ENCODE measurements at regions of chr2 and their contacts with region 1.

Region 1: GRCh38 chr2:234135720-234136221 is 85.3 kb downstream of the SPP2 start:
- DNase-seq: peak; percentile 80 to 94
- ATAC-seq: peak; percentile 93 to 96
- H3K4me3 ChIP-seq: no peak overlapping the region
- H3K27ac ChIP-seq: peak overlapping the region; percentile 82 to 94
- H3K4me1 ChIP-seq: peaks cover 30% of the 10 kb centered on the region
- CTCF ChIP-seq: peak; percentile 92
- EP300 ChIP-seq: no peak
- POLR2A ChIP-seq: no peak
- RAD21 ChIP-seq: peak; percentile 99

Region 2: DNA sequence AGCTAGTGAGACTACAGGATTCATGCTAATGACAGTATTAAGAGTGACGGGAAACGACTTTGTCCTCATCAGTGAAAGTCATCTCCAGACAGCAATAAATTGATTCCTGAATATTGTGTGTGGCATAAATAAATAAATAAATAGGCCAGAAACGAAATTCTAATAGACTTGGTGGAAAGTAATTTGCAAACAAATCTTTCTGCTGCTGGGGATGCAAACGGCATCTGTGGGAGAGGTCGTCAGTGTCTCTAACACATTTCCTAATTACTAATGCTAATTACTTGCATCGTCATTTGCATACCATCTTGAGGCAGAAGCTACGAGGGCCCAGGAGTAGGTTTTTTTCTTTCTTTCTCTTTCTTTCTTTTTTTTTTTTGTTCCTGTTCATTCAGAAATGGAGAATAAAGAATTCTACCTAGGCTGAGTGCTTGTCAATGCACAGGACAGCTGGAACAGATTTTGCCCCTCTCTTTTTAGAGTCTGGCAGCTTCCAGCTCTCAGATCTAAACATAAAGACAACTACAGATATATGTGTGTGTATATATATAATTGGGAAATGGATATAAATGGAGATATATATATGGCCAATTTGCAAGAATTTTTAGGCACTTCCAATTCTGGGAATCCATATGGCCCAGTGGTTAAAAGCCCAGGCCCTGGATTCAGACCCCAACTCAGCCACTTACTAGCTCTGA is 10.2 kb before region 1 on chr2:
- CTCF ChIA-PET with region 1: interaction called, 12 read pairs
- POLR2A ChIA-PET with region 1: no interaction called
- DNase-seq: no peak
- ATAC-seq: no peak
- H3K4me3 ChIP-seq: no peak overlapping the region
- H3K27ac ChIP-seq: no peak overlapping the region
- H3K4me1 ChIP-seq: no peaks in the 10 kb centered on the region
- CTCF ChIP-seq: no peak
- EP300 ChIP-seq: no peak
- POLR2A ChIP-seq: no peak
- RAD21 ChIP-seq: no peak

Region 3: DNA sequence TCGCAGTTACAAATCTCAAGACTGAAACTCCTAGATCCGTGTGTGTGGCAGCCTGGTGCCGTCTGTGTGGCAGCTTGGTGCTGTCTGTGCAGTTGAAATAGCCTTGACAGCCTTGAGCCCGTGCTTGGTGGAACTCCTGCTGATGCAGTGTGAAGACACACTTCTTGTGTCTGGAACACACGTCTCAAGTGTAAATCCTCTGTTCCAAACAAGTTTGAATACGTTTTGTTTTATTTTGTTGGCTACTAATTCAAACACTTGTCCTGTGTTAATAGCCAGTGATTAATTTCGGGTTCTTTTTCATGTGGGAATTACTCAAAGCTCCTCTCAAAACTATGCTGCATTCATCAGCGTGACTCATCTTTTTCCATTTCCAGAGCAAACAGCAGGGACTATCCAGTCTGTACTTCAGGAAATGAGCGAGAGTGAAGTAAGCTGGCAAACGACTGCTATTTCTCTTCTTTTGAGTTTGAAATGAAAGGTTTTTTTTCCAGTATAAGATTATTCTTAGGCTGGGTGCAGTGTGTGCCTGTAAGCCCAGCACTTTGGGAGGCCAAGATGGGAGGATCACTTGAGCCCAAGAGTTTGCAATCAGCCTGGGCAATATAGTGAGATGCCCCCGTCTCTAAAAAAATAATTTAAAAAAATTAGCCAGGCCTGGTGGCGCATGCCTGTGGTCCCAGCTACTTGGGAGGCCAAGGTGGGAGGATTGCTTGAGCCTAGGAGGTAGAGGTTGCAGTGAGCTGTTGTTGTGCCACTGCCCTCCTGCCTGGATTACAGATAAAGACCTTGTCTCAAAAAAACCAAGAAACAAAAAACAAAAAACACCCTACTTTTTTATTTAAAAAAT is 67.6 kb after region 1 on chr2:
- CTCF ChIA-PET with region 1: interaction called, 15 read pairs
- POLR2A ChIA-PET with region 1: no interaction called
- DNase-seq: peak; percentile 78 to 94
- ATAC-seq: peak; percentile 96 to 97
- H3K4me3 ChIP-seq: 0 out of 3 replicates have a peak overlapping the region, but pooled peaks have one; percentile 1
- H3K27ac ChIP-seq: peak overlapping the region; percentile 89 to 98
- H3K4me1 ChIP-seq: peaks cover 36% of the 10 kb centered on the region
- CTCF ChIP-seq: no peak
- EP300 ChIP-seq: peak; percentile 94
- POLR2A ChIP-seq: no peak
- RAD21 ChIP-seq: peak; percentile 49 to 63

Region 4: GRCh38 chr2:234288974-234289455 is 153.2 kb after region 1 on chr2:
- CTCF ChIA-PET with region 1: interaction called, 12 read pairs
- POLR2A ChIA-PET with region 1: no interaction called
- DNase-seq: peak; percentile 33 to 70
- ATAC-seq: peak; percentile 60 to 74; a peak in 3 of 6 replicates
- H3K4me3 ChIP-seq: no peak overlapping the region
- H3K27ac ChIP-seq: peak overlapping the region; percentile 55 to 83
- H3K4me1 ChIP-seq: peaks cover 46% of the 10 kb centered on the region
- CTCF ChIP-seq: peak; percentile 63
- EP300 ChIP-seq: no peak
- POLR2A ChIP-seq: no peak
- RAD21 ChIP-seq: peak; percentile 66 to 74

Region 5: DNA sequence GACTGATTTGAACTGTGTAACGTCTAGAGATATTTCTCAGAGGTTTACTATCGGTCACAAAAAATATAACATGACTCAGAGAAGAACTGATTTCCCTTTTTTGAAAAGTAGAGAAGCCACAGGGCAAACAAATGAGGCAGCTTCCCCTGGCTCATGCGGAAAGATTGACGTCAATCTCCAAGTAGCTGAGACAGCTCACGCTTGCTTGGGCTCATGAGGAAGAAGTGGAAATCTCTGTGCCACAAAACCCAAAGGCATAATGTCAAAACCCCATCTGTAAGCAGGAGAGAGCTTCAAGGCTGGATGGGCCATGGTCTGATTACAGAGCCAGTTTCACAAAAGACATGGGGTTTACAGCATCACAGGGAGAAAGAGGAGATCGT is 173.0 kb after region 1 on chr2:
- CTCF ChIA-PET with region 1: interaction called, 22 read pairs
- POLR2A ChIA-PET with region 1: no interaction called
- DNase-seq: peak; percentile 58 to 96
- ATAC-seq: peak; percentile 84 to 87
- H3K4me3 ChIP-seq: no peak overlapping the region
- H3K27ac ChIP-seq: peak overlapping the region; percentile 88 to 94
- H3K4me1 ChIP-seq: peaks cover 58% of the 10 kb centered on the region
- CTCF ChIP-seq: no peak
- EP300 ChIP-seq: peak; percentile 91 to 96
- POLR2A ChIP-seq: no peak
- RAD21 ChIP-seq: peak; percentile 51 to 65

Region 6: DNA sequence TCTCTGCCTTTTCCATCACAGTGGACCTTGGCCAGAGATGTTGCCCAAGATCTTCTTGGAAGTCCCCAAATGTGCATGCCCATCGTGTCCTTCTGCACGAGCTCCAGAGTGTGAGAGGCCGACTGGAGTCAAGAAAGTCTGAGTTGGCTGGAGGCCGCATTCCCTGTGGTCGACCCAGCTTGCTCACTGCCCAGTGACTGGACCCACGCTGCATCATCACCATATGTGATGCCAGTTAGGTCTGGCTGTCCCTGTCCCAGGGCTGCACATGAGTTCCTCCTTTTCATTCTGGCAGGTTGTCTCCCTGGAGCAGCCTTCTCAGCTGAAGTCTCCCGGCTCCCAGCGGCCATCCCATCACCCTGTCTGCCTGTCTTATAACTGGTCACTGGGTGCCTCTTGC is 267.3 kb after region 1 on chr2:
- CTCF ChIA-PET with region 1: interaction called, 12 read pairs
- POLR2A ChIA-PET with region 1: no interaction called
- DNase-seq: no peak
- ATAC-seq: peak; percentile 24 to 27; a peak in 3 of 6 replicates
- H3K4me3 ChIP-seq: no peak overlapping the region
- H3K27ac ChIP-seq: peak overlapping the region in 1 of 2 experiments; percentile 69; a peak in 4 of 6 replicates
- H3K4me1 ChIP-seq: peaks cover 20% of the 10 kb centered on the region
- CTCF ChIP-seq: no peak
- EP300 ChIP-seq: no peak
- POLR2A ChIP-seq: no peak
- RAD21 ChIP-seq: no peak